A673 (cell line): ENCODE measurements at regions of chr7 and their contacts with region 1.

Region 1: DNA sequence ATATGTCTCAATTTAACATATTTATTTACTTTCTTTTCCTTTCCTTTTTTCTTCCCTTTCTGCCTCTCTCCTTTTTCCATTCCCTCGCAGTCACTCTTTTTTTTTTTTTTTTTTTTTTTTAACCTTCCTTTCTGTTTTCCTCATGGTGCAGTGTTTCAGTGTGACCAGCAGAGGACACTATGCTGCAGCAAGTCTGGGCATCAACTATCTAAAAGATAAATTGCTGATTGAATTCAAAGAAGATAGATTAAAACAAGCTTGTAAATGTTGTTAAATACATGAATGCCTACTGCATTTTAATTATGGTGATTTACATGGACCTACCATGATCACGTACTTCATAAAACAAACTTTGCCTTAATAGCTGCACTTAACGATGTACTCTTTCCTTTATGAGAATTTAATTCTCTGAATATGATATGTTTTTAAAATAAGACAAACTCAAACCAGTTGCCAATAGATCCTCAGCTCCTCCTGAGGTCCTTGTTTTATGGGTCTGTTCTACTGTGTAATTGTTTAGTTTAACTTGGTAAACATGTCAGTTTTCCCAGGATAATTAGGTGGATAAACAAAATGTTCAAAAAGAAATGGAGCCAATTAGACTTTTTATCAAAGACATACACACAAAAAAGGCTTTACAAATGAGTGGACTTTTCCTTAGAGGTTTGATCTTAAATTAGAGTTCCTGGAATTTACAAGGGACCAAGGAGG is 101.0 kb upstream of the AGR3 start:
- DNase-seq: peak; percentile 75
- H3K4me3 ChIP-seq: no peak overlapping the region
- H3K27ac ChIP-seq: peak overlapping the region; percentile 21
- H3K4me1 ChIP-seq: peaks cover 18% of the 10 kb centered on the region
- H3K27me3 ChIP-seq: no peaks in the 10 kb centered on the region
- CTCF ChIP-seq: peak; percentile 99

Region 2: GRCh38 chr7:16594061-16594460 is 388.7 kb before region 1 on chr7:
- CTCF ChIA-PET with region 1: interaction called, 11 read pairs
- POLR2A ChIA-PET with region 1: no interaction called
- intact Hi-C with region 1: no loop called
- DNase-seq: no peak
- H3K4me3 ChIP-seq: no peak overlapping the region
- H3K27ac ChIP-seq: no peak overlapping the region
- H3K4me1 ChIP-seq: peaks cover 18% of the 10 kb centered on the region
- H3K27me3 ChIP-seq: no peaks in the 10 kb centered on the region
- CTCF ChIP-seq: no peak

Region 3: GRCh38 chr7:17152721-17153120 is 169.9 kb after region 1 on chr7:
- CTCF ChIA-PET with region 1: no interaction called
- POLR2A ChIA-PET with region 1: no interaction called
- intact Hi-C with region 1: loop called (anchors 10 kb)
- DNase-seq: no peak
- H3K4me3 ChIP-seq: no peak overlapping the region
- H3K27ac ChIP-seq: no peak overlapping the region
- H3K4me1 ChIP-seq: no peaks in the 10 kb centered on the region
- H3K27me3 ChIP-seq: no peaks in the 10 kb centered on the region
- CTCF ChIP-seq: no peak

Region 4: GRCh38 chr7:17530741-17531417 is 548.1 kb after region 1 on chr7:
- CTCF ChIA-PET with region 1: interaction called, 3 read pairs
- POLR2A ChIA-PET with region 1: no interaction called
- intact Hi-C with region 1: loop called (anchors 5 kb)
- DNase-seq: peak; percentile 54
- H3K4me3 ChIP-seq: no peak overlapping the region
- H3K27ac ChIP-seq: no peak overlapping the region
- H3K4me1 ChIP-seq: peaks cover 7% of the 10 kb centered on the region
- H3K27me3 ChIP-seq: no peaks in the 10 kb centered on the region
- CTCF ChIP-seq: peak; percentile 60

Region 5: DNA sequence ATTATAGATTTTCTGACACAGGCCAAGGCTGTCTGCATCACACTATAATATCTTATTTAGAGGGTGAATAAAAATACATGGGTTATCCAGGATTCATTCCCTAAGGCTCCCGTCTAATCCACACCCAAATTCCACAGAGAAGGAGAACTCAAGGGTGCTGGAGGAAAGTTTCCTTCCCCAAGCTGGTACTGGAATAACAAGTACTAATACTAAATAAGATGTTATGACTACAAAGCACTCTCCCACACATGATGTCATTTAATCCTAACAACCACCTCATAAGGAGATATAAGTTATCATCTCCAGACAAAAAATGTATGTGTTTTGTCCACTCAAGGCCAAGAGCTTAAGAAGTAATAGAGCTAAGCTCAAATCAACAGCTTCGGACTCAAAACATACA is 904.5 kb after region 1 on chr7:
- CTCF ChIA-PET with region 1: no interaction called
- POLR2A ChIA-PET with region 1: interaction called, 19 read pairs
- intact Hi-C with region 1: no loop called
- DNase-seq: no peak
- H3K4me3 ChIP-seq: no peak overlapping the region
- H3K27ac ChIP-seq: no peak overlapping the region
- H3K4me1 ChIP-seq: no peaks in the 10 kb centered on the region
- H3K27me3 ChIP-seq: no peaks in the 10 kb centered on the region
- CTCF ChIP-seq: no peak